ENCODE measurements at regions of chr18 and their contacts with region 1.

Region 1: DNA sequence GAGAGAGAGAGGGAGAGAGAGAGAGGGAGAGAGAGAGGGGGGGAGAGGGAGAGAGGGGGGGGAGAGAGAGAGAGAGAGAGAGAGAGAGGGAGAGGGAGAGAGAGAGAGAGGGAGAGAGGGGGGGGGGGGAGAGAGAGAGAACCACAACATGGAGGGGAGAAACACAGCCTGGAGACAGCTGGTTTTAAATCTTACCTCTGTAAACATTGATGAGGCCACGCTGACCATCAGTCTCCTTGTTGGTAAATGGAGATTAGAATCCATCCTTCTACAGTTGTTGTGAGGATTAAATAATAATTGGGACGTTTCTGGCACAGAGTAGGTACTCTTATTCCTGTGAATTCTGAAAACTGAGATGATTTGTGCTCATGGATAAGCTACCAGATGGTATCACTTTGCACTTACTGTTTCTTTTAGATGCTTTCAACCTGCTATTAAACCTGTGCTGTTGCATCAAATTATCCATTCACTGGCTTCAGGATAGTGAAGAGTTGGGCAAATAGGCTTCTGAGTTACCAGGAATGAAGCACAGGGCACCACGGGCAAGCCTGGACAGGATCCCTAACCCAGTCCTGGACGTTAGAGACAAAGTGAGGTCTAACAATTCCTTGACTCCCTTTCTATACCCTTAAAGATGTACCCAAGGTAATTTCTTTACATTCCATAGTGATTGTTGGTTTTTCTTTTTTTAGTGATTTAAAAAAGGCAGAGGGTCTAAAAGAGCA is 318.1 kb downstream of the ZNF521 start:
- DNase-seq: no peak
- ATAC-seq: no peak
- H3K4me3 ChIP-seq: no peak overlapping the region
- H3K27ac ChIP-seq: no peak overlapping the region
- H3K4me1 ChIP-seq: no peaks in the 10 kb centered on the region
- H3K27me3 ChIP-seq: no peaks in the 10 kb centered on the region
- CTCF ChIP-seq: no peak
- POLR2A ChIP-seq: no peak

Region 2: GRCh38 chr18:24937639-24938275 is 96.2 kb before region 1 on chr18:
- intact Hi-C with region 1: no loop called
- DNase-seq: no peak
- ATAC-seq: no peak
- H3K4me3 ChIP-seq: no peak overlapping the region
- H3K27ac ChIP-seq: no peak overlapping the region
- H3K4me1 ChIP-seq: no peaks in the 10 kb centered on the region
- H3K27me3 ChIP-seq: no peaks in the 10 kb centered on the region
- CTCF ChIP-seq: no peak
- POLR2A ChIP-seq: no peak

Region 3: DNA sequence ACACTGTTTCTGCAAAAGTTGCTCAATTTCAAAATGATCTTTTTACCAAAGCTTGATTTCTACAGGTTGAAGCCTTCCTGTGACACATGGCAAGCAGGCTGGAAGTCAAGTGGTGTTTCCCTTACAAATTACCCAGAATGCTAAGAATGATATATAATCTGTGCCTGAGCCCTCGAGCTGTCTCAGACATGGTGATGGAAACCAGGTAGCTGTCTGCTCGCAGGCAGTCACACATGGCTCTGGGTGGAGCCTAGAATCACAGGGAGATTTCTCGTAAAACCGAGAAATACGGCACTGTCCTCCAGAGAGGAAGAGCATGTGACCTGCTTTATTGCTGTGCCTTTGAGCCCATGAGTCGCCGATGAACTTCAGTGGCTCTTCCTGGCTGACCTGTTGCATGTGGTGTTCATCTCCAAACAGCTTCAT is 74.8 kb before region 1 on chr18:
- intact Hi-C with region 1: loop called in 1 of 10 experiments (anchors 5 kb)
- DNase-seq: no peak
- ATAC-seq: no peak
- H3K4me3 ChIP-seq: no peak overlapping the region
- H3K27ac ChIP-seq: no peak overlapping the region
- H3K4me1 ChIP-seq: peaks cover 0 to 9% (median 0%) of the 10 kb centered on the region in 12 donors
- H3K27me3 ChIP-seq: no peaks in the 10 kb centered on the region
- CTCF ChIP-seq: no peak
- POLR2A ChIP-seq: no peak

Region 4: DNA sequence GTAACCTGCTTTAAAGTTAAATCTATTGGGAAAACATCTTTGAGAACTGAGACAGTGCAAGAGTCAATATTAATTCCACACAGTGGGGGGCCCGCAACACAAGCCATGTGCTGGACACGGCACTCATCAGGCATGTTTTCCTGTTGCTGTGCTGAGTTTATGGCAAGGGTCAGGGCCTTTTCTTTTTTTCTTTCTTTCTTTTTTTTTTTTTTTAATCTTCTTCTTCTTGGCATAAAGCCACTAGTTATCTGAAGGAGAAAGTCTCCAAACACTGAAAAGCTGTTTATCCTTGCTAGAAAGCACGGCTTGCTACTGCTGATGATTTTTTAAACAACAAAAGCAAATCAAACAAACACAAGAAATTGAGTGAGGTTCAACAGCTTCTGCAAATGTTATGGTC is 66.0 kb after region 1 on chr18:
- intact Hi-C with region 1: no loop called
- DNase-seq: peak in 1 of 5 donors; percentile 29
- ATAC-seq: peak in 1 of 4 donors; percentile 32
- H3K4me3 ChIP-seq: no peak overlapping the region
- H3K27ac ChIP-seq: no peak overlapping the region
- H3K4me1 ChIP-seq: peaks cover 0 to 36% (median 10%) of the 10 kb centered on the region in 12 donors
- H3K27me3 ChIP-seq: no peaks in the 10 kb centered on the region
- CTCF ChIP-seq: no peak
- POLR2A ChIP-seq: no peak